ENCODE measurements at regions of chr1 and their contacts with region 1.

Region 1: DNA sequence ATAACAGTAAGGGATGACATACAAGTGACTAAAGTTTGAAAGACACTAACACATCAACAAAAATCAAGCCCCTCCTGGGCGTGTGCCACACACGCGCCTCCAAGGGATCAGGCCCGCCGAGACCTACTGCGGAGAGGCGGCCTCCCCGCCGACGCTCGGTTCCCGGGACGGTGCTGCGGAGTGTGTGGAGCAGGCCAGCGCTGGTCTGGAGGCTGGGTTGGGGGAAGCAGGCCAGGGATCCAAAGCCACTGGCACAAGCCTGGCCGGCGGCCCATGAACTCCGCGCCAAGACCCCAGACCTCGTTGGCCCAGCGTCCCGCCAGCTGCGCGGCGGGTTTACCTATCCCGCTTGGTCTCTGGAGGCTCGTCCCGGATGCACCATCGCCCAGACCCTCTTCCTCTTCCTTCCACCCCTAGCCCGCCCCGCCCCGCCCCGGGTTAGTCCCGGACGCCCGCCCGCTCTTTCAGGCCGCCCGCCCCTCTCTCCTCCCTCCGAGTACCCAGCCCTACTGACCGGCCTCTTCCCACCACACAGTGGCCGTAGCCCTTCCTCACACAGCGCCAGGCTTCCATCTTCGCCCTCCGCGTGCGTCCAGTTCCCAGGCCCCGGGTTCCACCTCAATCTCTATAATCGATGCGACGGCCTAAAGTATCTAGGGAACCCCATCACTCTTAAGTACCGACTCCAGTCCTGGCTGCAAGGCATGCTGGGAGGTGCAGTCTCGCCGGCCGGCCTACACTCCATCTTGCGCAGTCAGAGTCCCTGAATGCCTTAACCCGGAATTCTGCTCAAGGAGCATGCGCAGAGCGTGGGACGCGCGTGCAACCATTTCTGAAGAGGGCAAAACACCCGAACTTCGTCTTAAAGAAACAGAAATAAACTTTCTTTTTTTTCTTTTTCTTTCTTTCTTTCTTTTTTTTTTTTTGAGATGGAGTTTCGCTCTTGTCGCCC is at the start of gene ANGEL2:
- H3K4me3 Mint-ChIP-seq: peak within 1 kb of the TSS; percentile 98
- H3K27ac Mint-ChIP-seq: peak within 1 kb of the TSS; percentile 98
- H3K4me1 Mint-ChIP-seq: peaks cover 21% of the 10 kb centered on the region
- H3K27me3 Mint-ChIP-seq: no peaks in the 10 kb centered on the region

Region 2: GRCh38 chr1:212104586-212105325 is 910.6 kb before region 1 on chr1:
- intact Hi-C with region 1: no loop called
- H3K4me3 Mint-ChIP-seq: no peak overlapping the region
- H3K27ac Mint-ChIP-seq: no peak overlapping the region
- H3K4me1 Mint-ChIP-seq: no peaks in the 10 kb centered on the region
- H3K27me3 Mint-ChIP-seq: no peaks in the 10 kb centered on the region

Region 3: DNA sequence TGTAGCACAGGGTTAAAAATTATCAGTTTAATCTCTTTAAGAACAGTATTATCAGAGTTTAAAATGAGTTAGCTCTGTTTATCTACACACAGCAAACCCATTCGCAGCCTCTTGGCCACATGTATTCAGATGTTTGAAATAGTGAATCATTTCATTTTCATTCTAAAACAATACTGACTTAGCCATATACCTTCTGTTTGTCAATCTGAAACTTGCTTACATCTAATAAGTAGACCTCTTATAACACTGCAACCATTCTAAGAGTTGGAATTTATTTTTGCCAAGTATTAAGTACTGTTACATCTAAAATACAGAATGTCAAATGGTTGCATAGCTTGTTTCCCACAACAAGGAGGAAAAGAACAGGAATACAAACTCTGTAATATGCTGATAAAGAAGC is 25.1 kb before region 1 on chr1:
- intact Hi-C with region 1: no loop called
- H3K4me3 Mint-ChIP-seq: no peak overlapping the region
- H3K27ac Mint-ChIP-seq: no peak overlapping the region
- H3K4me1 Mint-ChIP-seq: no peaks in the 10 kb centered on the region
- H3K27me3 Mint-ChIP-seq: no peaks in the 10 kb centered on the region

Region 4: DNA sequence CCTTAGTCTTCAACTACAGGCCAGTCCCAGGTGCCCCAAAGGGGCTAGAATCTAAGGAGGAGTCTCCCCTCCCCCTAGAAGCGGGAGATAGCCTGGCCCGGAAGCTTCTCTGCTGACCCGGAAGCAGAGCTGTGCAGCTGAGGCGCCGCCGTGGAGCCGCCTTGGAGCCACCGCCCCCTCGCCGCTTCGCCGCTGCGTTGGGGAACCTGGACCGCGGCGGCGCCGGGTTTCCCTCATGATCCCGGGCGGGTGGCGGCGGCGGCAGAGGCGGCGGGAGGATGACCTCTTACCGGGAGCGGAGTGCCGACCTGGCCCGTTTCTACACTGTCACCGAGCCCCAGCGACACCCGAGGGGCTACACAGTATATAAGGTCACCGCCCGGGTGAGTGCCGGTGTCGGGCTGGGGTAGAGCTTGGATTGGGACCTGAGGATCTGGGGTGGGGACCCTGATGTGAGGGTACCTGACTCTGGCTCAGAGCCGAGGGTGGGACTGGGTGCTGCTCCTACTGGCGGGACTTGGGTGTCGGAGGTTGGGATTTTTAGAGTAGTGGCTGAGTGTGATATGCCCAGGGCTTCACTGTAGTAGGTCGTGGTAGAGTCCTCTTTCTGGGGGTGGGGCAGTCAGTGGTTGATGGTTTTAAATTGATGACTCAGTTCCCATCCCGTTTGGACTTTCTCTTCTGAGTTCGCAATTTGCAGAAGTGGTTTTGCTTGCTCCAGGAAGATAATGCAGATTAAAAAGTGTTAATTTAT is 35.9 kb after region 1 on chr1 and contains the start of gene RPS6KC1:
- intact Hi-C with region 1: loop called (anchors 1 kb)
- H3K4me3 Mint-ChIP-seq: peak within 1 kb of the TSS; percentile 99
- H3K27ac Mint-ChIP-seq: peak within 1 kb of the TSS; percentile 95
- H3K4me1 Mint-ChIP-seq: peaks cover 41% of the 10 kb centered on the region
- H3K27me3 Mint-ChIP-seq: no peaks in the 10 kb centered on the region

Region 5: DNA sequence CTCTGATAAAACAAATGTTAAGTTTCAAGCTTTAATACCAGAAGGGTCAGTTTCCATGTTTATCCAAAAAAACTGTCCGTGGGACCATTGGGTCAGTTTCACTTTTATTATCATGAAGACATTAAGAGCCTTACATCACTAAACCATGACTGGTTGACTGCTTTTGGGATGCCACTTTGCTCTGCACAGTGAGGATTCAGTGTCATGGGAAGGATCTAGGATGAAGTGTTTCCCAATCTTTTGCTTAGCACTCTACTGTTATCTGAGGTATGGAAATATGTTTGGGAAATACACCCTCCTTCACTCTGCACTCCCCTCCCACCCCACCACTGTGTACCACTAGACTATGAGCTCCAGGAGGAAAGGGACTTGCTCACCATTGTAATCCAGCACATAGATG is 52.0 kb after region 1 on chr1:
- intact Hi-C with region 1: loop called (anchors 5 kb)
- H3K4me3 Mint-ChIP-seq: no peak overlapping the region
- H3K27ac Mint-ChIP-seq: no peak overlapping the region
- H3K4me1 Mint-ChIP-seq: peaks cover 19% of the 10 kb centered on the region
- H3K27me3 Mint-ChIP-seq: no peaks in the 10 kb centered on the region

Region 6: DNA sequence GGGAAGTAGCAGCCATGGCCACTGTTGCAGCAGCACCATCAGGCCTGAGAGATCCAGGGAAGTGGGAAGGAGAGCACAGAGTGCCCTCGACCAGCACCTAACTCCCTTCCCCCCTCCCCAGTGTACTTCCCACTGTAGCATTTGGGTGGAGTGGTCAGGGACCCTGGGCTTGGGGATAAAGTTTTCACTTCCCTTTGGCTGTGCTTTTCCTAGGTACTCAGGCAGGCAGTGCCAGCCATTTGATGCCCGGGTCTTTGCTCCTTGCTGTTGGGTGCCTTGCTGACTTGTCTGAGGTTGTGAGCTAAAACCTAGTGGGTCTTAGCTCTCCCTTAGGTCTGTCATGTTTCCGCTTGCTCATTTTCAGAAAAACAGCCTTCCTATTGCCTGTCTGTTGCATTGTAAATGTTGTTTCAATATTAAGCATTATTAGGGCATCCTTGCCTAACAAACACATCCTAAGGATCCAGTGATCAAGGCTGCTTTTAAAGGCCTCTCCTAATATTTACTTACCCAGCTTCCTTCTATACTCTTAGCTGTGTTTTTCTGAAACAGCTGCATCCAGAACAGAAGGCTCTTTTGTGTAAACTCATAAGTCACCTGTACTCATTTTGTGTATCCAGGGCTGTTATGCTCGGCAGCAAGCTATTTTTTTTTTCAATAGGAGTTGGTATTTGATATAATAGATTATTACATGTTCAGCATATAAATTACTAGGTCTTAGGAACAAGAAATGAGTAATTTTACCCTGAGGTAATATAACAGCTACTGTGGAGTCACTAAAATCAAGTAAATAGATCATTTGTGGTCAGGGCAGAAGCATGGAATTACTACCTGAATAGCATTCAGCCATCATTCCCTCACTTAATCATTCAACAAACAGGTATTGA is 553.8 kb after region 1 on chr1:
- intact Hi-C with region 1: no loop called
- H3K4me3 Mint-ChIP-seq: no peak overlapping the region
- H3K27ac Mint-ChIP-seq: no peak overlapping the region
- H3K4me1 Mint-ChIP-seq: no peaks in the 10 kb centered on the region
- H3K27me3 Mint-ChIP-seq: no peaks in the 10 kb centered on the region

Measured in dendritic cell treated with granulocyte-macrophage colony-stimulating factor and Interleukin-4, amounts not matched to agents 40 ng/mL and 50 ng/mL, for 4 days (primary cell).